ENCODE measurements at regions of chr5 and their contacts with region 1.

Region 1: GRCh38 chr5:142981886-142982820 is 212.0 kb downstream of the ARHGAP26 start:
- DNase-seq: peak; percentile 75
- H3K4me3 ChIP-seq: peak overlapping the region in 1 of 3 experiments; percentile 5
- H3K27ac ChIP-seq: peak overlapping the region; percentile 62
- H3K4me1 ChIP-seq: peaks cover 62% of the 10 kb centered on the region
- H3K27me3 ChIP-seq: no peaks in the 10 kb centered on the region
- CTCF ChIP-seq: no peak
- POLR2A ChIP-seq: no peak

Region 2: DNA sequence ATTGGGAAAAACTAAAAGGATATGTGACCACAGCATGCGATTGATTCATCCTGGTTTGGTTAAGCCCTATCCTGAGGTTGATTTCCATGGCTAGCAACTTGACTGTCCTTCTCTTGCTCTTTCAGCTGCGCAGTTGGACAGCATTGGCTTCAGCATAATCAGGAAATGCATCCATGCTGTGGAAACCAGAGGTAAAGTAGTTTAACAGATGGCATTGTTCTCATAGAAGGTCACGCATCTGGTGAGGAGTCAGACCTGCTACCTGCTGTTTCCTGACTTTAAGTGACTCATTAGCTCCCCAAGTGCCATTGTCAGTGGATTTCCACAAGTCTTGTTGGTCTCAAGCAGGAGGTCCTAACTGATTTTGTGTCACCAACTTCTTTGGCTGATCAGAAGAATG is 54.9 kb after region 1 on chr5:
- CTCF ChIA-PET with region 1: no interaction called
- POLR2A ChIA-PET with region 1: no interaction called
- dilution Hi-C with region 1: no loop called
- intact Hi-C with region 1: loop called (anchors 2 kb)
- DNase-seq: peak; percentile 88
- H3K4me3 ChIP-seq: no peak overlapping the region
- H3K27ac ChIP-seq: peak overlapping the region; percentile 3
- H3K4me1 ChIP-seq: peaks cover 22% of the 10 kb centered on the region
- H3K27me3 ChIP-seq: no peaks in the 10 kb centered on the region
- CTCF ChIP-seq: no peak
- POLR2A ChIP-seq: no peak

Measured in endothelial cell of umbilical vein (primary cell).